Spleen (tissue), 13 donors: ENCODE measurements at regions of chr3 and their contacts with region 1.

Region 1: GRCh38 chr3:196524527-196524926 is 9.4 kb upstream of the SMCO1 start:
- DNase-seq: no peak
- H3K4me3 ChIP-seq: no peak overlapping the region
- H3K27ac ChIP-seq: no peak overlapping the region
- H3K4me1 ChIP-seq: peaks cover 0 to 15% (median 3%) of the 10 kb centered on the region in 6 donors
- H3K27me3 ChIP-seq: peaks cover 0 to 8% (median 0%) of the 10 kb centered on the region in 7 donors
- CTCF ChIP-seq: no peak
- POLR2A ChIP-seq: no peak

Region 2: DNA sequence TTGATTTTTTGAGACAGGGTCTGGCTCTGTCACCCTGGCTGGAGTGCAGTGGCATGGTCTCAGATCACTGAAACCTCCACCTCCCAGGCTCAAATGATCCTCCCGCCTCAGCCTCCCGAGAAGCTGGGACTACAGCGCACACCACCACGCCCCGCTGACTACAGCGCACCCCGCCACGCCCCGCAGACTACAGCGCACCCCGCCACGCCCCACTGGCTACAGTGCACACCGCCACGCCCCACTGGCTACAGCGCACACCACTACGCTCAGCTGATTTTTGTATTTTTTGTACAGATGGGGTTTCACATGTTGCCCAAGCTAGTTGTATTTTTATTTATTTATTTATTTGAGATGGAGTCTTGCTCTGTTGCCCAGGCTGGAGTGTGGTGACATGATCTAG is 272.6 kb before region 1 on chr3:
- intact Hi-C with region 1: loop called (anchors 5 kb)
- DNase-seq: no peak
- H3K4me3 ChIP-seq: no peak overlapping the region
- H3K27ac ChIP-seq: no peak overlapping the region
- H3K4me1 ChIP-seq: peaks cover 0 to 7% (median 0%) of the 10 kb centered on the region in 6 donors
- H3K27me3 ChIP-seq: no peaks in the 10 kb centered on the region
- CTCF ChIP-seq: no peak
- POLR2A ChIP-seq: no peak

Region 3: GRCh38 chr3:196632046-196632751 is 107.7 kb after region 1 on chr3:
- intact Hi-C with region 1: no loop called
- DNase-seq: peak; percentile 97
- H3K4me3 ChIP-seq: peak overlapping the region; percentile 45 to 87 (median 60)
- H3K27ac ChIP-seq: peak overlapping the region; percentile 88 to 98 (median 94)
- H3K4me1 ChIP-seq: peaks cover 15 to 78% (median 36%) of the 10 kb centered on the region in 6 donors
- H3K27me3 ChIP-seq: no peaks in the 10 kb centered on the region
- CTCF ChIP-seq: peak in 7 of 11 experiments; percentile 7 to 65 (median 45)
- POLR2A ChIP-seq: peak in 1 of 3 donors; percentile 63

Region 4: DNA sequence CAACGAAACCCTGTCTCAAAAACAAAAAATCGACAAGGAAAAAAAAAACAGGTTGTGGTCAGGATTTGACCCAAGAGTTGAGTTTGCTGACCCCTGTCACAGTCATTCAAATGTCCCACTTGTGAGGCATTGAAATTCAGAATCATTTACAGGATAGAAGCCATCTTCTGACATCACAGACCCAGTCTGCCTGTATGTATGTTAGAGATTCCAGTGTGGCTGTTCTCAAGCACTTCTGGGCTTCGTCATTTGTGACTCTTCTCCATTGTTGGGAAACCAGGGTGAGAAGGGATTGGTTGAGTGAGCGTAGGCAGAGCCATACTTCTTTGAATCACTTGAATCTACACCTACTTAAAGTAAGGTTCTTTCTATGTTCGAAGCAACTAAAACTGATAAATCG is 1492.6 kb after region 1 on chr3:
- intact Hi-C with region 1: no loop called
- DNase-seq: no peak
- H3K4me3 ChIP-seq: no peak overlapping the region
- H3K27ac ChIP-seq: no peak overlapping the region
- H3K4me1 ChIP-seq: no peaks in the 10 kb centered on the region
- H3K27me3 ChIP-seq: no peaks in the 10 kb centered on the region
- CTCF ChIP-seq: no peak
- POLR2A ChIP-seq: no peak